SK-N-SH (cell line): ENCODE measurements at regions of chr16 and their contacts with region 1.

Region 1: DNA sequence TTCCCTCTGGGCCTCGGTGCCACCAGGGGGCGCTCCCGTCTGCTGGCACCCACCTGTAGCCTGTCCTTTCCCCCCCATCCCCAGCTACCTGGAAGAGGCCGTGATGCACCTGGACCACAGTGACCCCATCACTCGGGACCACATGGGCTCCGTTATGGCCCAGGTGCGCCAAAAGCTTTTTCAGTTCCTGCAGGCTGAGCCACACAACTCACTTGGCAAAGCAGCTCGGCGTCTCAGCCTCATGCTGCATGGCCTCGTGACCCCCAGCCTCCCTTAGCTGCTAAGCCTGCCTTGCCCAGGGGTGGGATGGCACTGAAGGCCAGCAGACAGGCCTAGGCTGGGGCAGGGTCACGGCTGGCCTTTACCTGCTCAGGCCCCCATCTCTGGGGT is 818 bp upstream of the NRN1L start:
- DNase-seq: peak; percentile 90
- H3K4me3 ChIP-seq: no peak overlapping the region
- H3K27ac ChIP-seq: no peak overlapping the region
- H3K4me1 ChIP-seq: peaks cover 7 to 13% of the 10 kb centered on the region in 2 experiments; a peak in 2 of 4 replicates
- H3K27me3 ChIP-seq: no peaks in the 10 kb centered on the region
- CTCF ChIP-seq: peak; percentile 91
- EP300 ChIP-seq: no peak
- RAD21 ChIP-seq: peak; percentile 71

Region 2: GRCh38 chr16:67872786-67873537 is 10.9 kb before region 1 on chr16 and contains the start of gene EDC4:
- CTCF ChIA-PET with region 1: interaction called, 48 read pairs
- POLR2A ChIA-PET with region 1: interaction called, 6 read pairs
- DNase-seq: peak; percentile 95
- H3K4me3 ChIP-seq: peak within 1 kb of the TSS; percentile 94 to 96
- H3K27ac ChIP-seq: peak within 1 kb of the TSS; percentile 64 to 66; a peak in 3 of 4 replicates
- H3K4me1 ChIP-seq: peaks cover 11 to 13% of the 10 kb centered on the region in 2 experiments; a peak in 1 of 4 replicates
- H3K27me3 ChIP-seq: no peaks in the 10 kb centered on the region
- CTCF ChIP-seq: no peak
- EP300 ChIP-seq: peak in 1 of 2 experiments; percentile 54; a peak in 1 of 4 replicates
- RAD21 ChIP-seq: no peak
- polyA plus RNA-seq, gene EDC4: 38.0 and 45.1 TPM in 2 replicates

Region 3: GRCh38 chr16:67901734-67902133 is 17.9 kb after region 1 on chr16:
- CTCF ChIA-PET with region 1: interaction called, 10 read pairs
- POLR2A ChIA-PET with region 1: no interaction called
- DNase-seq: no peak
- H3K4me3 ChIP-seq: no peak overlapping the region
- H3K27ac ChIP-seq: no peak overlapping the region
- H3K4me1 ChIP-seq: no peaks in the 10 kb centered on the region
- H3K27me3 ChIP-seq: no peaks in the 10 kb centered on the region
- CTCF ChIP-seq: no peak
- EP300 ChIP-seq: no peak
- RAD21 ChIP-seq: no peak

Region 4: GRCh38 chr16:67910158-67910557 is 26.3 kb after region 1 on chr16:
- CTCF ChIA-PET with region 1: interaction called, 65 read pairs
- POLR2A ChIA-PET with region 1: interaction called, 6 read pairs
- DNase-seq: peak; percentile 71
- H3K4me3 ChIP-seq: no peak overlapping the region
- H3K27ac ChIP-seq: peak overlapping the region in 1 of 2 experiments; percentile 47; a peak in 2 of 4 replicates
- H3K4me1 ChIP-seq: peaks cover 0 to 28% of the 10 kb centered on the region in 2 experiments; a peak in 1 of 4 replicates
- H3K27me3 ChIP-seq: no peaks in the 10 kb centered on the region
- CTCF ChIP-seq: no peak
- EP300 ChIP-seq: no peak
- RAD21 ChIP-seq: peak; percentile 48

Region 5: GRCh38 chr16:67935402-67936123 is 51.7 kb after region 1 on chr16:
- CTCF ChIA-PET with region 1: interaction called, 564 read pairs
- POLR2A ChIA-PET with region 1: interaction called, 12 read pairs
- DNase-seq: peak; percentile 98
- H3K4me3 ChIP-seq: peak overlapping the region; percentile 84 to 89
- H3K27ac ChIP-seq: peak overlapping the region; percentile 79 to 85
- H3K4me1 ChIP-seq: peaks cover 11 to 28% of the 10 kb centered on the region in 2 experiments; a peak in 2 of 4 replicates
- H3K27me3 ChIP-seq: no peaks in the 10 kb centered on the region
- CTCF ChIP-seq: no peak
- EP300 ChIP-seq: no peak
- RAD21 ChIP-seq: no peak